ENCODE measurements at regions of chr20 and their contacts with region 1.

Region 1: DNA sequence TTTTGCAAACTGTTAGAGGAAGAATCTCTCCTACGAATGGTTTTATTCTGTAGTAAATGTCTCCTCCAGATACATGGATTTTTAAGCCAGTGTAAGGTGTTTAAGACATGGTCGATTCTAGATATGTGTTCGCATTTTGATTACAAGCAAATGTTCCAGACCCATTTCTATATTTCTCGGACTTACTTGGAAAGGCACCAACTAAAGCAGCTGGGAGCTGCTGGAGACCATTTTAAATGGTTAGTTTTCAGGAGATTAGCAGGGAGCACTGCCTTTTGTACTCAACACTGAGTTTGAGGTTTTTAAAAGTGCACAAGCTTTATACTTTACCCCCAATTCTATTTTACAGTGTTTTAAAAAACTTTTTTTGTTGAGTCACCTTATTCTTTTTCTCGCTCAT is 857.0 kb downstream of the KIF16B start:
- DNase-seq: no peak
- ATAC-seq: no peak
- H3K4me3 ChIP-seq: no peak overlapping the region
- H3K4me3 Mint-ChIP-seq: no peak overlapping the region
- H3K27ac ChIP-seq: no peak overlapping the region
- H3K27ac Mint-ChIP-seq: no peak overlapping the region
- H3K4me1 ChIP-seq: no peaks in the 10 kb centered on the region
- H3K4me1 Mint-ChIP-seq: no peaks in the 10 kb centered on the region
- H3K27me3 ChIP-seq: no peaks in the 10 kb centered on the region
- H3K27me3 Mint-ChIP-seq: no peaks in the 10 kb centered on the region
- CTCF ChIP-seq: no peak

Region 2: GRCh38 chr20:15576411-15576810 is 139.8 kb before region 1 on chr20:
- CTCF ChIA-PET with region 1: no interaction called
- POLR2A ChIA-PET with region 1: no interaction called
- intact Hi-C with region 1: no loop called
- DNase-seq: no peak
- ATAC-seq: no peak
- H3K4me3 ChIP-seq: no peak overlapping the region
- H3K4me3 Mint-ChIP-seq: no peak overlapping the region
- H3K27ac ChIP-seq: no peak overlapping the region
- H3K27ac Mint-ChIP-seq: no peak overlapping the region
- H3K4me1 ChIP-seq: no peaks in the 10 kb centered on the region
- H3K4me1 Mint-ChIP-seq: no peaks in the 10 kb centered on the region
- H3K27me3 ChIP-seq: no peaks in the 10 kb centered on the region
- H3K27me3 Mint-ChIP-seq: no peaks in the 10 kb centered on the region
- CTCF ChIP-seq: no peak

Region 3: GRCh38 chr20:15703171-15703911 is 12.9 kb before region 1 on chr20:
- CTCF ChIA-PET with region 1: no interaction called
- POLR2A ChIA-PET with region 1: no interaction called
- intact Hi-C with region 1: no loop called
- DNase-seq: no peak
- ATAC-seq: no peak
- H3K4me3 ChIP-seq: no peak overlapping the region
- H3K4me3 Mint-ChIP-seq: no peak overlapping the region
- H3K27ac ChIP-seq: no peak overlapping the region
- H3K27ac Mint-ChIP-seq: no peak overlapping the region
- H3K4me1 ChIP-seq: no peaks in the 10 kb centered on the region
- H3K4me1 Mint-ChIP-seq: no peaks in the 10 kb centered on the region
- H3K27me3 ChIP-seq: no peaks in the 10 kb centered on the region
- H3K27me3 Mint-ChIP-seq: no peaks in the 10 kb centered on the region
- CTCF ChIP-seq: no peak

Region 4: DNA sequence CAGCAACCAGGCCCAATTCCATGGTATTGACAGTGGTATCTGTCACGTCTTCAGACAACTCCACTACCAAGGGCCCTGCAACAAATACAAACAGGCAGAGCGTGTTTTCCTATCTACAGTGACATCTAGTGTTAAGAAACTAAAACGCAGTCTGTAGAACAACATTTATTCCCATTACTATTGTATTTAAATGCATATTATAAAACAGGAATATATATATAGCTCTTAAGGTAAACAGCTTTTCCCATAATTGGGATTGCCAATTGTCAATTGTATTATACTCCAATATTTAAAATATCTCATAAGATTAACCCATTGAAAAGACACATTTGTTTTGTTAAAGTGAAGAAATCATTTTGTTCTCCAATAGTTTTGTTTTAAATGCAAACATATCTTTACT is 759.8 kb after region 1 on chr20:
- CTCF ChIA-PET with region 1: no interaction called
- POLR2A ChIA-PET with region 1: no interaction called
- intact Hi-C with region 1: loop called in 1 of 2 experiments (anchors 10 kb)
- DNase-seq: peak in 3 of 14 experiments; percentile 29 to 39 (median 34)
- ATAC-seq: no peak
- H3K4me3 ChIP-seq: no peak overlapping the region
- H3K4me3 Mint-ChIP-seq: no peak overlapping the region
- H3K27ac ChIP-seq: no peak overlapping the region
- H3K27ac Mint-ChIP-seq: no peak overlapping the region
- H3K4me1 ChIP-seq: no peaks in the 10 kb centered on the region
- H3K4me1 Mint-ChIP-seq: peaks cover 7% of the 10 kb centered on the region
- H3K27me3 ChIP-seq: no peaks in the 10 kb centered on the region
- H3K27me3 Mint-ChIP-seq: no peaks in the 10 kb centered on the region
- CTCF ChIP-seq: peak; percentile 74